CD8-positive, alpha-beta T cell (primary cell): ENCODE measurements at regions of chr6 and their contacts with region 1.

Region 1: GRCh38 chr6:32933636-32934085 is 7.2 kb downstream of the HLA-DMB start:
- DNase-seq: peak; percentile 50 to 87 (median 81)
- ATAC-seq: peak; percentile 61
- H3K4me3 ChIP-seq: no peak overlapping the region
- H3K4me3 Mint-ChIP-seq: no peak overlapping the region
- H3K27ac ChIP-seq: no peak overlapping the region
- H3K27ac Mint-ChIP-seq: no peak overlapping the region
- H3K4me1 ChIP-seq: no peaks in the 10 kb centered on the region
- H3K4me1 Mint-ChIP-seq: peaks cover 5% of the 10 kb centered on the region
- H3K27me3 ChIP-seq: no peaks in the 10 kb centered on the region
- H3K27me3 Mint-ChIP-seq: no peaks in the 10 kb centered on the region
- CTCF ChIP-seq: peak; percentile 72

Region 2: DNA sequence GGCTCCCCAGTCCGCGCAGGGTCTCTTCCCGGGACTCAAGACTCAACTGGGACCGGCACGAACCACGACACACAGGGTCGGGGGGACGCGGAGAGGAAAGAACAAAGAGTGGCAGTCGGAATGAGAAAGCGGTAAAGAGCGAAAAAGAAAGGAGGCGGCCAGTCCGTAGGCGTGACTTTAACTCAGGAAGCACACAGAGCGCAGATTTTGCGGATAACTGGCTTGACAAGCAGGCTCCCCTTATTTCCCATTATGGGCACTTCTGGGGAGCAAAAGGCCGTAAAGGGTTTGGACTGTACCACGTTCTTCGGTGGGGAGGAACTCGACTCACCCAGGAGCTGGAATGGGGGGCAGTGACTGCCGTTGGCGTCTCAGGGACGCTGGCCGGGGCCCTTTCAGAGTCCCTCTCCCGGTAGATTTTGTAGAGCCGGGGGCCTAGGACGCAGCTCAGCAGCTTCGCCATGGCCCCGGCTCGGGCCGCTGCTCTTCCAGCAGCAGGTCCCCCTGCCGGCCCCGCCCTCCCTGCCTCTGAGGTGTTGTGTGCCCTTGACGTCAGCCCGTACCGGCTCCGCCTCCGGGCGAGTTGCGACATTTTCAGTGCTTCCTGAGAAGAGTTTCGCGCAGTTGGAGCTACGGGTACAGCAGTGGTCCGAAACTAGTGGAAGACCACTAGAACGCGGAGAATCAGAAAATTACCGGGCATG is 1230.7 kb before region 1 on chr6 and contains the start of gene ABHD16A:
- CTCF ChIA-PET with region 1: no interaction called
- POLR2A ChIA-PET with region 1: no interaction called
- intact Hi-C with region 1: no loop called
- DNase-seq: peak; percentile 93 to 99 (median 98)
- ATAC-seq: peak; percentile 93
- H3K4me3 ChIP-seq: peak within 1 kb of the TSS; percentile 83 to 98
- H3K4me3 Mint-ChIP-seq: peak within 1 kb of the TSS; percentile 99
- H3K27ac ChIP-seq: peak within 1 kb of the TSS; percentile 91 to 100
- H3K27ac Mint-ChIP-seq: peak within 1 kb of the TSS; percentile 92
- H3K4me1 ChIP-seq: peaks cover 22% of the 10 kb centered on the region
- H3K4me1 Mint-ChIP-seq: peaks cover 36% of the 10 kb centered on the region
- H3K27me3 ChIP-seq: no peaks in the 10 kb centered on the region
- H3K27me3 Mint-ChIP-seq: no peaks in the 10 kb centered on the region
- CTCF ChIP-seq: no peak
- total RNA-seq, gene ABHD16A: 79.6 to 81.6 TPM

Region 3: GRCh38 chr6:32894080-32895005 is 39.3 kb before region 1 on chr6:
- CTCF ChIA-PET with region 1: interaction called, 24 read pairs
- POLR2A ChIA-PET with region 1: interaction called, 9 read pairs
- intact Hi-C with region 1: no loop called
- DNase-seq: peak; percentile 88 to 98 (median 95)
- ATAC-seq: peak; percentile 96
- H3K4me3 ChIP-seq: peak overlapping the region; percentile 89 to 92
- H3K4me3 Mint-ChIP-seq: peak overlapping the region; percentile 99
- H3K27ac ChIP-seq: peak overlapping the region; percentile 62 to 89
- H3K27ac Mint-ChIP-seq: peak overlapping the region; percentile 97
- H3K4me1 ChIP-seq: peaks cover 20% of the 10 kb centered on the region
- H3K4me1 Mint-ChIP-seq: peaks cover 46% of the 10 kb centered on the region
- H3K27me3 ChIP-seq: no peaks in the 10 kb centered on the region
- H3K27me3 Mint-ChIP-seq: no peaks in the 10 kb centered on the region
- CTCF ChIP-seq: no peak

Region 4: DNA sequence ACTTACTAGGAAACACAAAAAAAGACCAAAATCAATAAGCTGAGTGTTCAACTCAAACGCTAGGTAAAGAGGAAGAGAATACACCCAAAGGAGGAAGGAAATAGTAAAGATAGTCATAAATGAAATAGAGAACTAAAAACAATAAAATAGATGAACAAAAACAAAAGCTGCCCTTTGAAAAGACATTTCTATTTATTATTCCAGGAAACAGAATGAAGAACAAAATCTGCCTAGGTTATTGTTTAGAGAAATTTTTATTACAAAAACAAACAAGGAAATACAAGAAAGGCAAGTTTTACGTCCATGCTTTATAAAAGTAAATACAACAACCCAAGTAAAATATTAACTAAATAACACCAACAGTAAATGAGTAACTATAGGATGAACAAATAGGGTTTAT is 12.9 kb before region 1 on chr6:
- CTCF ChIA-PET with region 1: interaction called, 13 read pairs
- POLR2A ChIA-PET with region 1: no interaction called
- intact Hi-C with region 1: no loop called
- DNase-seq: no peak
- ATAC-seq: no peak
- H3K4me3 ChIP-seq: no peak overlapping the region
- H3K4me3 Mint-ChIP-seq: no peak overlapping the region
- H3K27ac ChIP-seq: no peak overlapping the region
- H3K27ac Mint-ChIP-seq: no peak overlapping the region
- H3K4me1 ChIP-seq: no peaks in the 10 kb centered on the region
- H3K4me1 Mint-ChIP-seq: no peaks in the 10 kb centered on the region
- H3K27me3 ChIP-seq: peaks cover 0 to 3% of the 10 kb centered on the region in 2 experiments
- H3K27me3 Mint-ChIP-seq: peaks cover 6% of the 10 kb centered on the region
- CTCF ChIP-seq: no peak

Region 5: DNA sequence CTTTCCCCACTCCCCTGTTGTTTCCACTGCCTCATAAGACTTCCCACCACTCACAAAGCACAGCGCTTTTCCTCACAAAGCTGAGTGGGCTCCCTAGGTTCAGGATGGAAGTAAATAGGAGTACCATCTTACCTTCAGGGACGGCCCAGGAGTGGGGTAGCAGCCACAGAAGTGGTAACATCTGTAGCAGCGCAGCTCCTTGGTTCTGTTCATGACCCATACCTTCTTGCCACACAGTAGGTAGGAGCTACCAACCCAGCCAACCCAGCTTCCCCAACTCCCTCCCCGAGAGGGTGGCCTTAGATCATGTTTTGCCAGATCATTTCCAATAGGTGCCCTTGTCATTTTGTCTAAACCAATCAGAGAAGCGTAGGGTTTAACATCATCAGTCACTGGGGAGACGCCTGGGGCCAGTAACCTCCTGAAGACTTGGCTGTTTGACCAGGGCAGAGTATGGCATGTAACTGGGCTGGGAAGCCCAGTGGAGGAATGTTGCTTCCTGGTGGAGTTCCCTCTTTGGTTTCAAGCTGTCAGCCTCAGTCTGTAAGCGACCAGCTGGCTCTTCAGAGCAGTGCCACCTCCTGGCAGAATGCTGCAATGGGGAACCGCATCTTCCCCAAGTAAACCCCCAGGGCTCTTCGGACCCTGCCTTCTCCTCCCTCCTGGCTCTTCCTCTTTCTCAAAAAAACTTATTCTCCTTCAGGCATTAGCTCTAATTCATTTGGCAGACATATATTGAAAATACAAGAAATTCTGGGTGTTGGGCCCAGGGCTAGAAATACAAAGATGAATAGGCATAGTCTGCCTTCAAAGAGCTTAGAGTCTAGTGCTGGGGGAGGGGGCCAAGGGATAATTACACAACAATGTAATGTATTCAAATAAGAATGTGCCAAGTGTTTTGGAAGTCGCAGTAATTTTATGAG is 19.4 kb after region 1 on chr6 and contains the start of gene HLA-DMA:
- CTCF ChIA-PET with region 1: interaction called, 326 read pairs
- POLR2A ChIA-PET with region 1: interaction called, 4 read pairs
- intact Hi-C with region 1: loop called (anchors 1 kb)
- DNase-seq: peak; percentile 55 to 92 (median 77)
- ATAC-seq: peak; percentile 98
- H3K4me3 ChIP-seq: peak within 1 kb of the TSS; percentile 49 to 52
- H3K4me3 Mint-ChIP-seq: peak within 1 kb of the TSS; percentile 85
- H3K27ac ChIP-seq: peak within 1 kb of the TSS; percentile 28 to 66
- H3K27ac Mint-ChIP-seq: peak within 1 kb of the TSS; percentile 93
- H3K4me1 ChIP-seq: peaks cover 29% of the 10 kb centered on the region
- H3K4me1 Mint-ChIP-seq: peaks cover 55% of the 10 kb centered on the region
- H3K27me3 ChIP-seq: no peaks in the 10 kb centered on the region
- H3K27me3 Mint-ChIP-seq: no peaks in the 10 kb centered on the region
- CTCF ChIP-seq: peak; percentile 86
- total RNA-seq, gene HLA-DMA: 25.9 to 32.3 TPM

Region 6: GRCh38 chr6:34161857-34162515 is 1228.3 kb after region 1 on chr6:
- CTCF ChIA-PET with region 1: no interaction called
- POLR2A ChIA-PET with region 1: no interaction called
- intact Hi-C with region 1: no loop called
- DNase-seq: no peak
- ATAC-seq: no peak
- H3K4me3 ChIP-seq: no peak overlapping the region
- H3K4me3 Mint-ChIP-seq: no peak overlapping the region
- H3K27ac ChIP-seq: no peak overlapping the region
- H3K27ac Mint-ChIP-seq: no peak overlapping the region
- H3K4me1 ChIP-seq: no peaks in the 10 kb centered on the region
- H3K4me1 Mint-ChIP-seq: no peaks in the 10 kb centered on the region
- H3K27me3 ChIP-seq: no peaks in the 10 kb centered on the region
- H3K27me3 Mint-ChIP-seq: peaks cover 2% of the 10 kb centered on the region
- CTCF ChIP-seq: no peak